Left colon (tissue), 2 donors: ENCODE measurements at regions of chr10 and their contacts with region 1.

Region 1: GRCh38 chr10:9342885-9343570 is 1288.5 kb downstream of the GATA3 start:
- DNase-seq: no peak
- ATAC-seq: no peak

Region 2: GRCh38 chr10:10677479-10677878 is 1334.5 kb after region 1 on chr10:
- intact Hi-C with region 1: loop called in 1 of 2 experiments (anchors 10 kb)
- DNase-seq: peak in 1 of 2 donors; percentile 53
- ATAC-seq: peak; percentile 73

Region 3: GRCh38 chr10:11036407-11037011 is 1693.5 kb after region 1 on chr10:
- intact Hi-C with region 1: loop called in 1 of 2 experiments (anchors 5 kb)
- DNase-seq: peak in 1 of 2 donors; percentile 72
- ATAC-seq: peak; percentile 91